ENCODE measurements at regions of chr2 and their contacts with region 1.

Region 1: GRCh38 chr2:70142590-70143313 is 48.1 kb downstream of the C2orf42 start:
- DNase-seq: peak; percentile 99 to 100 (median 99)
- ATAC-seq: peak; percentile 90 to 91 (median 90)
- H3K4me3 ChIP-seq: peak overlapping the region in 11 of 12 donors; percentile 26 to 92 (median 73)
- H3K27ac ChIP-seq: peak overlapping the region; percentile 94 to 100 (median 98)
- H3K4me1 ChIP-seq: peaks cover 2 to 35% (median 20%) of the 10 kb centered on the region in 12 donors
- H3K27me3 ChIP-seq: no peaks in the 10 kb centered on the region
- CTCF ChIP-seq: peak; percentile 91 to 99 (median 97)
- POLR2A ChIP-seq: peak in 1 of 2 donors; percentile 47

Region 2: GRCh38 chr2:70111752-70112591 is 30.8 kb before region 1 on chr2:
- intact Hi-C with region 1: no loop called
- DNase-seq: no peak
- ATAC-seq: no peak
- H3K4me3 ChIP-seq: no peak overlapping the region
- H3K27ac ChIP-seq: peak overlapping the region in 1 of 12 donors; percentile 61
- H3K4me1 ChIP-seq: peaks cover 3 to 65% (median 20%) of the 10 kb centered on the region in 12 donors
- H3K27me3 ChIP-seq: no peaks in the 10 kb centered on the region
- CTCF ChIP-seq: no peak
- POLR2A ChIP-seq: no peak

Region 3: DNA sequence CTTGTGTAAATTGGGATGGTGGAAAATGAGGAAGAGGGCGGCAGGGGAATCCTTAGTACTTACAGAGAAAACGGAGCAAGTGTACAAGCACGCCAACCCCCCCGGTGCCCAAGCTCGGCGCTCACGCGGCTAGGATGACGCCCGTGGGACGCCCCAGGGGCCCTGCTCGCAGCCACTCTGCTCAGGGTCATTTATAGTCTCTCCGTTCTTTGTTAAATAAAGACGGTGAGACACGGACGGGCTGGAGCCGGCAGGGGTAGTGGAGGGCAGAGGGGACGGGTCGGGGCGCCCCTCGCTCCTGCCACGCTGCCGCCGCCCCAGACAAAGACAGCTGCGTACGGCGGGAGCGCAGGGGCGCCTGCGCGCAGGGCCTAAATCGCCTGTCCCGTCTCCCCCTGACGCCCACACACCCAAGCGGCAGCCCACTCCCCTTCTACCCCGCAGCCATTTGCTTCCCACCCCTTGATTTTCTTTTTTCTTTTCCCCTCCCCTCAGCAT is 17.7 kb before region 1 on chr2:
- intact Hi-C with region 1: loop called in 3 of 10 experiments (anchors 1 to 2 kb)
- DNase-seq: peak; percentile 69 to 79 (median 78)
- ATAC-seq: peak; percentile 45 to 67 (median 65)
- H3K4me3 ChIP-seq: peak overlapping the region; percentile 21 to 76 (median 62)
- H3K27ac ChIP-seq: peak overlapping the region; percentile 97 to 100 (median 99)
- H3K4me1 ChIP-seq: peaks cover 6 to 65% (median 26%) of the 10 kb centered on the region in 12 donors
- H3K27me3 ChIP-seq: no peaks in the 10 kb centered on the region
- CTCF ChIP-seq: peak in 1 of 12 donors; percentile 5
- POLR2A ChIP-seq: peak in 1 of 2 donors; percentile 32

Measured in heart left ventricle (tissue), 16 donors.